ENCODE measurements at regions of chr11 and their contacts with region 1.

Region 1: GRCh38 chr11:128720522-128720985 is 26.7 kb downstream of the FLI1 start:
- DNase-seq: peak in 9 of 14 experiments; percentile 20 to 74 (median 33)
- ATAC-seq: peak; percentile 46
- H3K4me3 ChIP-seq: peak overlapping the region; percentile 37
- H3K4me3 Mint-ChIP-seq: peak overlapping the region; percentile 87
- H3K27ac ChIP-seq: peak overlapping the region; percentile 65 to 84
- H3K27ac Mint-ChIP-seq: peak overlapping the region; percentile 90
- H3K4me1 ChIP-seq: peaks cover 98% of the 10 kb centered on the region
- H3K4me1 Mint-ChIP-seq: peaks cover 99% of the 10 kb centered on the region
- H3K27me3 ChIP-seq: no peaks in the 10 kb centered on the region
- H3K27me3 Mint-ChIP-seq: peaks cover 3% of the 10 kb centered on the region
- CTCF ChIP-seq: no peak

Region 2: GRCh38 chr11:128180446-128181087 is 540.0 kb before region 1 on chr11:
- CTCF ChIA-PET with region 1: no interaction called
- POLR2A ChIA-PET with region 1: no interaction called
- intact Hi-C with region 1: no loop called
- DNase-seq: peak in 1 of 14 experiments; percentile 10
- ATAC-seq: no peak
- H3K4me3 ChIP-seq: no peak overlapping the region
- H3K4me3 Mint-ChIP-seq: no peak overlapping the region
- H3K27ac ChIP-seq: no peak overlapping the region
- H3K27ac Mint-ChIP-seq: no peak overlapping the region
- H3K4me1 ChIP-seq: no peaks in the 10 kb centered on the region
- H3K4me1 Mint-ChIP-seq: no peaks in the 10 kb centered on the region
- H3K27me3 ChIP-seq: no peaks in the 10 kb centered on the region
- H3K27me3 Mint-ChIP-seq: no peaks in the 10 kb centered on the region
- CTCF ChIP-seq: no peak

Region 3: GRCh38 chr11:128733440-128734102 is 13.0 kb after region 1 on chr11:
- CTCF ChIA-PET with region 1: interaction called, 8 read pairs
- POLR2A ChIA-PET with region 1: interaction called, 74 read pairs
- intact Hi-C with region 1: loop called (anchors 2 kb)
- DNase-seq: peak in 7 of 14 experiments; percentile 22 to 60 (median 45)
- ATAC-seq: peak; percentile 52
- H3K4me3 ChIP-seq: peak overlapping the region; percentile 6
- H3K4me3 Mint-ChIP-seq: peak overlapping the region; percentile 76
- H3K27ac ChIP-seq: no peak overlapping the region
- H3K27ac Mint-ChIP-seq: peak overlapping the region; percentile 90
- H3K4me1 ChIP-seq: peaks cover 98% of the 10 kb centered on the region
- H3K4me1 Mint-ChIP-seq: peaks cover 98% of the 10 kb centered on the region
- H3K27me3 ChIP-seq: no peaks in the 10 kb centered on the region
- H3K27me3 Mint-ChIP-seq: no peaks in the 10 kb centered on the region
- CTCF ChIP-seq: no peak

Region 4: DNA sequence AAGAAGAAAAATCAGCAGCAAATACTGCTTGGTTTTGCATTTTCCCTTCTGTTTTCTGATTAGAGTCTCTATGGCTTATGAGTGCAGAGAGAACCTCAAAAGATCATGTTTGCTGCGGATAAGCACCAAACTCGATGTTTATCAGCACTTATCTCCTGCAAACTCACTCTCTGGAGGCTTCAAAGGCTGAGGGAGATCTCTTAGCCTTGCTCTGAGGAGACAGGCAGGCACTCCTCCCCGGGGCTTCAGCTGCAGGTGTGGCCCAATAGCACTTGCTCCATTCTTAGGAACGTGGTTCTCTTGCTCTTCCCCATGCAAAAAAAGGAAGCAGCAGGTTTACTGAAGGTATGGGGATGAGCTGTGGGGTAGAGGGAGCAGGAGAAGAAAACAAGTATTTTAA is 18.4 kb after region 1 on chr11:
- CTCF ChIA-PET with region 1: interaction called, 8 read pairs
- POLR2A ChIA-PET with region 1: interaction called, 74 read pairs
- intact Hi-C with region 1: loop called in 1 of 2 experiments (anchors 2 kb)
- DNase-seq: peak in 8 of 14 experiments; percentile 11 to 64 (median 40)
- ATAC-seq: peak; percentile 62
- H3K4me3 ChIP-seq: peak overlapping the region; percentile 24
- H3K4me3 Mint-ChIP-seq: peak overlapping the region; percentile 81
- H3K27ac ChIP-seq: peak overlapping the region in 1 of 2 donors; percentile 46
- H3K27ac Mint-ChIP-seq: peak overlapping the region; percentile 92
- H3K4me1 ChIP-seq: peaks cover 93% of the 10 kb centered on the region
- H3K4me1 Mint-ChIP-seq: peaks cover 92% of the 10 kb centered on the region
- H3K27me3 ChIP-seq: no peaks in the 10 kb centered on the region
- H3K27me3 Mint-ChIP-seq: no peaks in the 10 kb centered on the region
- CTCF ChIP-seq: no peak

Region 5: GRCh38 chr11:128763224-128763623 is 42.7 kb after region 1 on chr11:
- CTCF ChIA-PET with region 1: no interaction called
- POLR2A ChIA-PET with region 1: no interaction called
- intact Hi-C with region 1: no loop called
- DNase-seq: no peak
- ATAC-seq: no peak
- H3K4me3 ChIP-seq: no peak overlapping the region
- H3K4me3 Mint-ChIP-seq: no peak overlapping the region
- H3K27ac ChIP-seq: no peak overlapping the region
- H3K27ac Mint-ChIP-seq: peak overlapping the region; percentile 7
- H3K4me1 ChIP-seq: peaks cover 58% of the 10 kb centered on the region
- H3K4me1 Mint-ChIP-seq: peaks cover 60% of the 10 kb centered on the region
- H3K27me3 ChIP-seq: no peaks in the 10 kb centered on the region
- H3K27me3 Mint-ChIP-seq: no peaks in the 10 kb centered on the region
- CTCF ChIP-seq: no peak

Measured in CD4-positive, alpha-beta T cell (primary cell).